Esophagus squamous epithelium (tissue), 5 donors: ENCODE measurements at regions of chr12 and their contacts with region 1.

Region 1: DNA sequence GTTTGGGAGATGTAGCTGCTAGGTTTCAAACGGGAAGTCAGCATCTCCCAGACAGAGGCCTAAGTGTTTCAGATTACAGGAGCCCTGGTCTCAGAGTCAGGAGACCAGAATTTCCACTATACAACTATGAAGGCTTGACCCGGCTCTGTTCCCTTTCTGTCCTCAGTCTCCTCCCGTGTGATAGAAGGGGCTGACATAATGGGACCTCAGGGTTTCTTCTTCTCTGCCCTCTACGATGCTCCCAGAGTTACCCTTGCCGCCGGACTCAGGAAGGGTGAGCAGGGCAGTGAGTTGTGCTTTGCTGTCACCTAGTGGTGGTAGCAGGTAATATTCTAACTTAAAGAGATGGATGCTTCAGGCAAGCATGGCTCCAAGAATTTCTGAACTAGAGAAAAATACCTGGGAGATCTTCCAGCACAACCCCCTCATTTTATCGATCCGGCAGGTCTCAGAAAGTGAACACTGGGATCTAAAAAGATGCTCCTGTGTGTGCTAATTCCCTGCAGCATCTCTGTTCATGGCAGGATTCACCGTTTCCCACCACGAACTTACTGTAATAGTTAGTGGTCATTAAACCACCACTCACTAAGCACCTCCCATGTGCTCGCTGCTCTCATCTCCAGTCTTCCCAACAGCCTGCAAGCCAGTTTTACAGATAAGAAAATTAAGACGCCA is 84.4 kb downstream of the VWF start:
- DNase-seq: no peak
- H3K4me3 ChIP-seq: no peak overlapping the region
- H3K27ac ChIP-seq: no peak overlapping the region
- H3K4me1 ChIP-seq: peaks cover 0 to 9% (median 0%) of the 10 kb centered on the region in 3 donors
- H3K27me3 ChIP-seq: no peaks in the 10 kb centered on the region
- CTCF ChIP-seq: peak; percentile 70 to 92 (median 90)
- POLR2A ChIP-seq: no peak

Region 2: GRCh38 chr12:5988659-5989116 is 51.3 kb before region 1 on chr12:
- intact Hi-C with region 1: loop called (anchors 5 kb)
- DNase-seq: no peak
- H3K4me3 ChIP-seq: no peak overlapping the region
- H3K27ac ChIP-seq: no peak overlapping the region
- H3K4me1 ChIP-seq: peaks cover 0 to 4% (median 0%) of the 10 kb centered on the region in 3 donors
- H3K27me3 ChIP-seq: no peaks in the 10 kb centered on the region
- CTCF ChIP-seq: peak; percentile 88 to 97 (median 96)
- POLR2A ChIP-seq: no peak

Region 3: GRCh38 chr12:6470375-6471163 is 430.5 kb after region 1 on chr12 and contains the start of gene VAMP1:
- intact Hi-C with region 1: no loop called
- DNase-seq: peak; percentile 99
- H3K4me3 ChIP-seq: peak within 1 kb of the TSS; percentile 65 to 89 (median 67)
- H3K27ac ChIP-seq: peak within 1 kb of the TSS; percentile 84 to 96 (median 89)
- H3K4me1 ChIP-seq: peaks cover 6 to 53% (median 23%) of the 10 kb centered on the region in 3 donors
- H3K27me3 ChIP-seq: no peaks in the 10 kb centered on the region
- CTCF ChIP-seq: peak in 3 of 6 experiments; percentile 39 to 41 (median 39)
- POLR2A ChIP-seq: peak in 3 of 4 donors; percentile 53 to 99 (median 99)
- total RNA-seq, gene VAMP1: 1.2 to 9.1 (median 5.1) TPM